Activated CD4-positive, alpha-beta T cell treated with anti-CD3 and anti-CD28 coated beads for 36 hours (primary cell): ENCODE measurements at regions of chr11 and their contacts with region 1.

Region 1: DNA sequence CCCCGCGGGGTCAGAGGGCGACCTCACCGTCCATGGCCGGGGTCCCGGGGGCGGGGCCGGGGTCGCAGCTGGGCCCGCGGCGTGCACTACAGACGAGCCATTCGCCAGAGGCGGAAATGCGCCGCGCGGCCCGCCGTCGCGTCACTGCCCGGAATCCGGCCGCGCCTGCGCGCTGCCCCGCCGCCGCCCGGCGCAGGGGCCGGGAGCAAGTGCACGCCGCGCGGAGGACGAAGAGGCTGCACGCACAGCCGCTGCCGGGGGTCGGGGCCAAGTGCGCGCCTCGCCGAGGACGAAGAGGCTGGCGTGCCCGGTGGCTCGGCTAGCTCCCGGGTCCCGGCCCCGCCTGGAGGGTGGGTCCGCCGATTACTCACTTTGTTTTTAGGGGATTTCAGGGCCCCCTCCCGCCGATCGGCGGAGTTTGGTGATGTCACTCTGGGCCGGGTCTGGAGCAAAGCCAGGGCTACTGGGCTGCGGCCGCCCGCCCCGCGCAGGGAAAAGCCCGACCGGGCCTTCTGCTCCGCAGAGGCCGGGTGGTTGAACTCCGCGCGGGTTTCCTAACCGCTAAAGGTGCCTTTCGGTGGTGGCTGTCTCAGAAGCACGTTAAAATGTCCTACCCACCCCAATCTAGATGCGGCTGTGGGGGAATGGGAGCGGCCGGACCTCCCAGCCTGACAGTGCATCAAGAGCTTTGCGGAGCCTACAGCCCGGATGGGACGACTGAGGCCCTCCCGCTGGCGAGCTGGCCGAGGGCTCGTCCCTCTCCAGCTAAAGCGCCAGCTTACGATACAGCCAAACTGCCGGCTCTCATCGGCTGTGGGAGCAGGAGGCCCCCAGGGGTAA is at the start of gene RELA:
- DNase-seq: peak; percentile 96
- ATAC-seq: peak; percentile 90
- H3K4me3 Mint-ChIP-seq: peak within 1 kb of the TSS; percentile 88
- H3K27ac Mint-ChIP-seq: peak within 1 kb of the TSS; percentile 97
- H3K4me1 Mint-ChIP-seq: peaks cover 41% of the 10 kb centered on the region
- H3K27me3 Mint-ChIP-seq: no peaks in the 10 kb centered on the region
- total RNA-seq, gene RELA: 76.9 to 109 TPM

Region 2: GRCh38 chr11:65588199-65589054 is 74.6 kb before region 1 on chr11:
- CTCF ChIA-PET with region 1: interaction called, 3 read pairs
- POLR2A ChIA-PET with region 1: no interaction called
- intact Hi-C with region 1: loop called in 1 of 2 experiments (anchors 2 kb)
- DNase-seq: peak; percentile 88
- ATAC-seq: peak; percentile 86
- H3K4me3 Mint-ChIP-seq: peak overlapping the region; percentile 43
- H3K27ac Mint-ChIP-seq: peak overlapping the region; percentile 90
- H3K4me1 Mint-ChIP-seq: peaks cover 39% of the 10 kb centered on the region
- H3K27me3 Mint-ChIP-seq: no peaks in the 10 kb centered on the region

Region 3: DNA sequence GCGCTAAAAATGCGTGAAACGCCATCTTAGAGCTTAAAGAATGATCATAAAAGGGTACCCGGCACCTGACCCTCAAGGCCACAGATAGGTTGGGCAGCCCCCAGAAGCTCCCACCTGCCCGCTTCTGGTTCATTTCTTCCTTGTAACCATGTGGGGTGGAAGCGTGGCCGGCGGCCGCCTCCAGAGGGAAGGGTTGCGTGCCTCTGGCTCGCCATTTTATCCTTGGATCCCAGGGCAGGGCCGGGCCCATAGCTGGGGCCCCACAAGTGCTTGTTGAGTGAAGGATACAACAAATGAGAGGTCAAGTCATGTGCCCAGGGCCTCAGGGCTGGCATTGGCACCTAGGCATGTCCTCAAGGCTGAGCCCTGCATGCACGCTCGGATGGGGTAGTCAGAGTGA is 41.6 kb before region 1 on chr11:
- CTCF ChIA-PET with region 1: no interaction called
- POLR2A ChIA-PET with region 1: no interaction called
- intact Hi-C with region 1: no loop called
- DNase-seq: no peak
- ATAC-seq: no peak
- H3K4me3 Mint-ChIP-seq: no peak overlapping the region
- H3K27ac Mint-ChIP-seq: no peak overlapping the region
- H3K4me1 Mint-ChIP-seq: peaks cover 12% of the 10 kb centered on the region
- H3K27me3 Mint-ChIP-seq: no peaks in the 10 kb centered on the region

Region 4: DNA sequence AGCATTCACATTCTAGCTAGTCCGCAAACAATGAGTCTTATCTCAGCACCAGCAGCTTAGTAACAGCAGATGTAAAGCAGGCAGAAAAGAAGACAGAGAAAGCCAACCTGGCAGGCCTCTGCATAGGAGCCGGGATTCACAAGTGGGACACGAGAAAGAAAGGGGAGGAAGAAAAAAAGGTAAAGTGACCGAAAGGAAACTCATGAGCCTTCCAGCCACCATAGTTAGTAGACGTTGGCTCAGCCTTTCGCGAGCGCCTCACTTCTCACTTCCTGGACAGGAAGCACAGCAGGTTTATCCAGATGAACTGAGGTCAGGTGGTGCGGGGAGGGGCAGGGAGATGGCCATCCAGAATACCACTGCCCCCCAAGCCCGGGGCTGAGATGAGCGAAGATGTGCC is 29.3 kb after region 1 on chr11:
- CTCF ChIA-PET with region 1: no interaction called
- POLR2A ChIA-PET with region 1: no interaction called
- intact Hi-C with region 1: no loop called
- DNase-seq: no peak
- ATAC-seq: no peak
- H3K4me3 Mint-ChIP-seq: no peak overlapping the region
- H3K27ac Mint-ChIP-seq: peak overlapping the region; percentile 6
- H3K4me1 Mint-ChIP-seq: no peaks in the 10 kb centered on the region
- H3K27me3 Mint-ChIP-seq: no peaks in the 10 kb centered on the region